T-cell (primary cell): ENCODE measurements at regions of chr10 and their contacts with region 1.

Region 1: GRCh38 chr10:91617073-91617580 is 15.7 kb downstream of the PPP1R3C start:
- DNase-seq: no peak
- ATAC-seq: no peak
- H3K4me3 ChIP-seq: no peak overlapping the region
- H3K4me3 Mint-ChIP-seq: no peak overlapping the region
- H3K27ac ChIP-seq: no peak overlapping the region
- H3K27ac Mint-ChIP-seq: no peak overlapping the region
- H3K4me1 ChIP-seq: no peaks in the 10 kb centered on the region
- H3K4me1 Mint-ChIP-seq: no peaks in the 10 kb centered on the region
- H3K27me3 ChIP-seq: peaks cover 0 to 6% of the 10 kb centered on the region in 2 experiments
- H3K27me3 Mint-ChIP-seq: peaks cover 19 to 29% of the 10 kb centered on the region in 2 donors

Region 2: GRCh38 chr10:91389636-91390512 is 227.3 kb before region 1 on chr10:
- CTCF ChIA-PET with region 1: interaction called in 1 of 2 experiments, 12 read pairs
- POLR2A ChIA-PET with region 1: no interaction called
- DNase-seq: peak in 8 of 35 experiments; percentile 3 to 85 (median 25)
- ATAC-seq: peak; percentile 83 to 96 (median 90)
- H3K4me3 ChIP-seq: no peak overlapping the region
- H3K4me3 Mint-ChIP-seq: peak overlapping the region in 2 of 3 donors; percentile 0 to 7
- H3K27ac ChIP-seq: no peak overlapping the region
- H3K27ac Mint-ChIP-seq: peak overlapping the region in 1 of 2 donors; percentile 44
- H3K4me1 ChIP-seq: no peaks in the 10 kb centered on the region
- H3K4me1 Mint-ChIP-seq: peaks cover 5 to 7% (median 5%) of the 10 kb centered on the region in 3 donors
- H3K27me3 ChIP-seq: no peaks in the 10 kb centered on the region
- H3K27me3 Mint-ChIP-seq: peaks cover 16 to 39% of the 10 kb centered on the region in 2 donors

Region 3: DNA sequence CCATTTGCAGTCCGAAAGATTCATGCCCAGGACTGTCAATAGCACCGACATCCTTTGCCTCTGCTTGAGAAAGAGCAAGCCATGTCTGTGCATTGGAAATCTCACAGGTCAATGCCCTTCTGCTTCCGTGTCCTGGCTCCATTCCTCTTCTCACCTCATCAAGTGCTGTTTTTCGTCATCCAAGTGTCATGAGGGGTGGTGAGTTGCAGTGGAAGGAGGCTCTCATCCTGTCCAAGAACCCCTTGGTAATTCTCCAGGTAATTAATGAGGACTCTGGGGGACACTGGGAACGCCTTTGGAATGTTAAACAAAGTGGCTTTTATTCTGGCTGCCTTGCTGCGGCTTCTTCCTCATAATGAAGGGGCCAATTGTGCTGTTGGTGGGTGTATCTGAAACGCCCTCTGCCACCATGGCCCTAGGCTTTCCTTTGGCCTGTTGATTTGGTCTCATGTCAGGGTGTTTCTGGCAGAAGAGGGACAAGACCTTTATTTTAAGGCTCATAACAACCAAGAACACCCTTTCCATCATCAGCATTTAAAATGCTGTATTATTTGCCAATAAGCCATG is 42.0 kb before region 1 on chr10:
- CTCF ChIA-PET with region 1: no interaction called
- POLR2A ChIA-PET with region 1: no interaction called
- DNase-seq: no peak
- ATAC-seq: no peak
- H3K4me3 ChIP-seq: no peak overlapping the region
- H3K4me3 Mint-ChIP-seq: no peak overlapping the region
- H3K27ac ChIP-seq: no peak overlapping the region
- H3K27ac Mint-ChIP-seq: no peak overlapping the region
- H3K4me1 ChIP-seq: no peaks in the 10 kb centered on the region
- H3K4me1 Mint-ChIP-seq: no peaks in the 10 kb centered on the region
- H3K27me3 ChIP-seq: peaks cover 0 to 3% of the 10 kb centered on the region in 2 experiments
- H3K27me3 Mint-ChIP-seq: peaks cover 4 to 8% of the 10 kb centered on the region in 2 donors